ENCODE measurements at regions of chr7 and their contacts with region 1.

Region 1: GRCh38 chr7:24948739-24949138 is 31.2 kb downstream of the OSBPL3 start:
- DNase-seq: no peak
- H3K4me3 ChIP-seq: no peak overlapping the region
- H3K27ac ChIP-seq: no peak overlapping the region
- H3K4me1 ChIP-seq: no peaks in the 10 kb centered on the region
- H3K27me3 ChIP-seq: no peaks in the 10 kb centered on the region
- CTCF ChIP-seq: no peak

Region 2: DNA sequence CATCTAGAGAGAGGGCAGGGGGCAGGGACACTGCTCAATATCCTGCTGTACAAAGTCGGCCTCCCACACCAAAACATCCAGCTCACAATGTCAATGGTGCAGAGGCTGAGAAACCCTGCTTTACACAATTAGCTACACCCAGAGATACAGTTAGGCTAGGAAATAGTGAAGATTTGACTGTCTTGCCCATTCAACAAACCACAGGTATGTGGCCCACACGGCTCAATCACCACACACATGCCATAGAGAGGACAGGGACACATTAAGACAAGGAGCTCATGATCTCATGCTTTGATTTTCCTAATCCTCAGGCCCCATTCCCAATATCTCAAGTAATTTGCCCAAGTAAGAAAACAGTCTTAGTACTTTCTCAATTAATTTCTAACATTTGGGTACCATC is 79.2 kb before region 1 on chr7:
- CTCF ChIA-PET with region 1: no interaction called
- POLR2A ChIA-PET with region 1: no interaction called
- intact Hi-C with region 1: no loop called
- DNase-seq: no peak
- H3K4me3 ChIP-seq: no peak overlapping the region
- H3K27ac ChIP-seq: no peak overlapping the region
- H3K4me1 ChIP-seq: no peaks in the 10 kb centered on the region
- H3K27me3 ChIP-seq: no peaks in the 10 kb centered on the region
- CTCF ChIP-seq: no peak

Region 3: GRCh38 chr7:24959735-24960485 is 11.2 kb after region 1 on chr7:
- CTCF ChIA-PET with region 1: no interaction called
- POLR2A ChIA-PET with region 1: no interaction called
- intact Hi-C with region 1: loop called (anchors 2 kb)
- DNase-seq: no peak
- H3K4me3 ChIP-seq: no peak overlapping the region
- H3K27ac ChIP-seq: no peak overlapping the region
- H3K4me1 ChIP-seq: peaks cover 16% of the 10 kb centered on the region
- H3K27me3 ChIP-seq: no peaks in the 10 kb centered on the region
- CTCF ChIP-seq: no peak

Region 4: GRCh38 chr7:26843705-26844104 is 1895.0 kb after region 1 on chr7:
- CTCF ChIA-PET with region 1: no interaction called
- POLR2A ChIA-PET with region 1: interaction called, 12 read pairs
- intact Hi-C with region 1: no loop called
- DNase-seq: no peak
- H3K4me3 ChIP-seq: no peak overlapping the region
- H3K27ac ChIP-seq: no peak overlapping the region
- H3K4me1 ChIP-seq: no peaks in the 10 kb centered on the region
- H3K27me3 ChIP-seq: no peaks in the 10 kb centered on the region
- CTCF ChIP-seq: peak; percentile 55; the same call in 1 of the 2 replicates